ENCODE measurements at regions of chr12 and their contacts with region 1.

Region 1: DNA sequence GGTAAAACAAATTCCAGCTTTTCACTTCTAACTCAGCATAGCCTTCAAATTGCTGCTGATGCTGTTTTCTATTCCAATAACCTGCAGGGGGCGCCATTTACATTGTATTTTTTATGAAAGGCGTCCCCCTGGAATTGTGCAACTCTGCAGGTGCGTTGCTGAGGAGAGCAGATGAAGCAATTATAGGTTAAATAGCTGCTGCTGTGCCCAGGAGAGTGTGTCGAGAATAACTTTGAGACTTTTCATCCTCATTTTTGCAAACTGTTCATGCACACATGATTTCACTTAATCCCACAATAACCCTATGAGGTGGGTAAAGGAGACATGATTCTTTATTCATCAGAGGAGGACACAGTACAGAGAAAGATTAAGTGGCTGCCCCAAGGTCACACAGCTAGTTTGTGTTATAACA is 75.7 kb downstream of the MYRFL start:
- DNase-seq: no peak
- H3K4me3 ChIP-seq: no peak overlapping the region
- CTCF ChIP-seq: peak; percentile 54

Region 2: GRCh38 chr12:69879041-69879960 is 21.4 kb before region 1 on chr12:
- CTCF ChIA-PET with region 1: interaction called, 27 read pairs
- POLR2A ChIA-PET with region 1: no interaction called
- DNase-seq: no peak
- H3K4me3 ChIP-seq: peak overlapping the region; percentile 42
- CTCF ChIP-seq: peak; percentile 80

Region 3: GRCh38 chr12:69885658-69886057 is 15.1 kb before region 1 on chr12:
- CTCF ChIA-PET with region 1: interaction called, 33 read pairs
- POLR2A ChIA-PET with region 1: no interaction called
- DNase-seq: no peak
- H3K4me3 ChIP-seq: no peak overlapping the region
- CTCF ChIP-seq: no peak

Region 4: GRCh38 chr12:69961246-69961645 is 60.5 kb after region 1 on chr12:
- CTCF ChIA-PET with region 1: interaction called, 12 read pairs
- POLR2A ChIA-PET with region 1: no interaction called
- DNase-seq: no peak
- H3K4me3 ChIP-seq: no peak overlapping the region
- CTCF ChIP-seq: no peak

Region 5: DNA sequence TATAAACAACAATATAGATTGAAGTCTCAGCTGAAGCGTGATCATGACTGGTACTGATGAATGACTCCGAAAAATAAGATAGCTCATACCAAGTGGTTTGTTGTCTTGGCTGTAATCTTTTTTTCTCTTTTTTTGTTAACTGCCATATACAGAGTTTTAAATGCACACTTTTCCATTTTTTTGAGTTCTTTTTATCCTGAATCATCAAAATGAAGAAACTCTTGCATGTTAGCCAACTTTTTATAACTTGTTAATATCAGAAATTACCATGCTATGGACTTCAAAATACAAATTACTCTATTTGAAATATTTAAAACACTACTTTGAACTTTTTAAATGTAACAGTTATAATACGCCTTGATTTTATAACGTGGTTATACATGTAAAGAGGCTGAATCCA is 455.2 kb after region 1 on chr12:
- CTCF ChIA-PET with region 1: interaction called, 14 read pairs
- POLR2A ChIA-PET with region 1: no interaction called
- DNase-seq: no peak
- H3K4me3 ChIP-seq: no peak overlapping the region
- CTCF ChIP-seq: no peak

Region 6: DNA sequence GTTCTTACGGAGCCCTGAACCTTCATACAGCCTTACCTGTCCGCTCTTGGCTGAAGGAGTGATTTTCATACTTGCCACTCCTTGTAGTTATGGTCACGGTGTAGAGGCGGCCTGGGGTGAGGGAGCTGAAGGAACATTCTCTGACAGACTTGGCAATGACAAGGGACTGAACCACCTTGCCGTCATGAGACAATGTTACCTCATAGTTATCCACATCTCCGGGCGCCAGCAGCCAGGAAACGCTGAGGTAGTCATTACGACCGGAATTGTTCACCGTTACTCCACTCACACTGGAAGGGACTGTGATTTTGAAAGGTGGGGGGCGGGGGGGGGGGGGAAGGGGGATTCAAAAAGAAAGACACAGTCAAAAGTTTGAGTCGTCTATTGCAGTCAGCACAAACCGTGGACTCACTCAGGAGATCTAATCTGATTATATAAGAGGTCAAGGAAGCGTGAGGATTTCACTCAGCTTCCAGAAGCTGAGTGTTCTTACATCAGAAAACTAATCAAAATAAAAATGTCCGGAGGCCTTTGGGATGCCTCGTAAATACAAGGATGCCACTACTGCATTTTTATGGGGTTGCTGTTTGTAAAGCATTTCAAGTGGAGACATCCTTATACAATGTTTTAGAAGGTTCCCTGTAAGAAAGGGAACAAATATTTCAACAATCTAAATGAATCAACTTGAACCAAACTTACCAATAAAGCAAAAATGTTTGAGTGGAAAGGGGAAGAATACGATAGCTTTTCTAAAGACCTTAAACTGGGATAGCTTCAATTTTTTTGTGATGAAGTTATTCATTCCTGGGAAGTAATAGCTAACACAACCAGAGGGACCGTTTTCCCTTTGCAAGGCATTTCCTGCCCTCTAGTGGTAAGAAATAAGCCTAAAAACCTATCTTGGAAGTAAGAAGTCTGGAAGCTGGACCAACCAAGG is 675.9 kb after region 1 on chr12:
- CTCF ChIA-PET with region 1: interaction called, 43 read pairs
- POLR2A ChIA-PET with region 1: no interaction called
- DNase-seq: peak; percentile 71
- H3K4me3 ChIP-seq: no peak overlapping the region
- CTCF ChIP-seq: peak; percentile 66

Region 7: GRCh38 chr12:70719672-70720420 is 819.1 kb after region 1 on chr12:
- CTCF ChIA-PET with region 1: interaction called, 13 read pairs
- POLR2A ChIA-PET with region 1: no interaction called
- DNase-seq: peak; percentile 7
- H3K4me3 ChIP-seq: peak overlapping the region; percentile 58
- CTCF ChIP-seq: peak; percentile 85